Pancreas (tissue), 10 donors: ENCODE measurements at regions of chr5 and their contacts with region 1.

Region 1: GRCh38 chr5:169980418-169981053 is at the start of gene INSYN2B:
- DNase-seq: peak in 5 of 6 donors; percentile 42 to 66 (median 58)
- ATAC-seq: peak; percentile 91 to 97 (median 95)
- H3K4me3 ChIP-seq: peak within 1 kb of the TSS in 1 of 4 donors; percentile 25
- H3K27ac ChIP-seq: no peak within 1 kb of the TSS
- H3K4me1 ChIP-seq: no peaks in the 10 kb centered on the region
- H3K27me3 ChIP-seq: peaks cover 0 to 3% (median 0%) of the 10 kb centered on the region in 4 donors
- CTCF ChIP-seq: peak; percentile 33 to 54 (median 47)
- total RNA-seq, gene INSYN2B: not detected

Region 2: GRCh38 chr5:169695919-169696490 is 284.5 kb before region 1 on chr5:
- intact Hi-C with region 1: loop called in 1 of 3 experiments (anchors 10 kb)
- DNase-seq: no peak
- ATAC-seq: peak in 1 of 4 donors; percentile 31
- H3K4me3 ChIP-seq: no peak overlapping the region
- H3K27ac ChIP-seq: no peak overlapping the region
- H3K4me1 ChIP-seq: no peaks in the 10 kb centered on the region
- H3K27me3 ChIP-seq: no peaks in the 10 kb centered on the region
- CTCF ChIP-seq: no peak

Region 3: DNA sequence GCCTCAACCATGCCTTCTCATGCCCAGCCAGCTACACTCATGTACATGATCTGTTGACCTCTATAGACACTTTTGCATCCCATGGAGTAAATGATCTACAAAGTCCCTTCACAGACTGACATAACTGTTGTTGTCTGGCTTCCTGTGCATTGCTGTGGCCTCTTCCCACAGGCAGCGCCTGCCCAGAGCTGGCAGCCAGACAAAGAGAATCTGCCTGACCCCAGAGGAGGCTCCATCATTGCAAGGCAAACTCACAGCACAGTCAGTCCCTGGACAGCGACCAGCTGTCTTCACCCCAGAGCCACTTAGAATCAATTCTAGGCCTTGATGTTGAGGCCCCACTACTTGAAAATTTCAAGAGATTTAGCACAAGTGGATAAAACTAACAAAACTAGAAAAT is 65.8 kb before region 1 on chr5:
- intact Hi-C with region 1: no loop called
- DNase-seq: no peak
- ATAC-seq: no peak
- H3K4me3 ChIP-seq: no peak overlapping the region
- H3K27ac ChIP-seq: no peak overlapping the region
- H3K4me1 ChIP-seq: no peaks in the 10 kb centered on the region
- H3K27me3 ChIP-seq: no peaks in the 10 kb centered on the region
- CTCF ChIP-seq: no peak